Heart right ventricle (tissue), 16 donors: ENCODE measurements at regions of chr9 and their contacts with region 1.

Region 1: DNA sequence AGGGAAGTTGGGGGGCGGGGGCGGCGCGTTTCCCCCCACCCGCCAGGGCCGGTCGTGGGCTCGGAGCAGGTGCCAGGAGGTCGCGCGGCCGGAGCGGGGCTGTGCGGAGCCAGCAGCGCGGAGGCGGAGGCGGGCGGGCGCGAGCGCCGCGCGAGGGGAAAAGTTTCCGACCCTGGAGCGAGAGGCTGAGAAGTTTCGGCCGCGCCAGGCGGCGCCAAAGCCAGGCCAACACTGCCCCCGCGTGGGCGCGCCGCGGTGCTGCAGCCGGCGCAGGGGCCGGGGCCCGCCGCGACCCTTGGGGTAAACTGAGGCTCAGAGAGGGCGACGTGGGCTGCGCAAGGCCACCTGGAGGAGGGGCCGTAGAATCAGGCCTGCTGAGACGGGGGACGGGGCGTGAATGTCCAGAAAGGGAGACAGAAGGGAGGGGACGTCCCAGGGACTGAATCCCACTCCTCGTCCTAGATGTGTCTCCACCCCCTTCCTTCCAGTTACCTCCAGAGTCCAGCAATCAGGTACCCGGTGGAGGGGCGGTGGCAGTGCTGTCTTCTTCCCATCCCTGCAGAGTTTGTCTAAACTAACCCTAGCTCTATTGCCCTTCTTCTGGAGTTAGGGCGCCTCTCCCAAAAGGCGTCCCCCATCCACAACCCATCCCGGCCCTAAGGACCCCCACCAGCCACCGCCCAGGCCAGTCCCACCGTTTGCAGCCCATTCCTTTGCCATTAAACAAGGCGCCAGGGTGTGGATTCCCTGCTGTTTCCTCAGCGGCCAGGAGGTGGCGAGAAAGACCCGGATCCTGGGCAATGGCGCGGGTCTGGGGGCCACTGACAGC is 10.2 kb downstream of the C9orf50 start:
- DNase-seq: peak; percentile 79 to 87
- ATAC-seq: peak; percentile 28 to 75 (median 48)
- H3K4me3 ChIP-seq: peak overlapping the region; percentile 32 to 77 (median 64)
- H3K27ac ChIP-seq: peak overlapping the region; percentile 81 to 98 (median 94)
- H3K4me1 ChIP-seq: peaks cover 32 to 51% (median 43%) of the 10 kb centered on the region in 9 donors
- H3K27me3 ChIP-seq: no peaks in the 10 kb centered on the region
- CTCF ChIP-seq: peak; percentile 74 to 99 (median 87)

Region 2: GRCh38 chr9:129131300-129132145 is 479.2 kb before region 1 on chr9:
- intact Hi-C with region 1: loop called in 4 of 10 experiments (anchors 2 to 5 kb)
- DNase-seq: peak; percentile 81 to 82
- ATAC-seq: peak; percentile 80 to 90 (median 86)
- H3K4me3 ChIP-seq: no peak overlapping the region
- H3K27ac ChIP-seq: peak overlapping the region in 2 of 10 donors; percentile 2 to 28
- H3K4me1 ChIP-seq: peaks cover 0 to 20% (median 6%) of the 10 kb centered on the region in 9 donors
- H3K27me3 ChIP-seq: no peaks in the 10 kb centered on the region
- CTCF ChIP-seq: peak; percentile 95 to 99 (median 98)

Region 3: DNA sequence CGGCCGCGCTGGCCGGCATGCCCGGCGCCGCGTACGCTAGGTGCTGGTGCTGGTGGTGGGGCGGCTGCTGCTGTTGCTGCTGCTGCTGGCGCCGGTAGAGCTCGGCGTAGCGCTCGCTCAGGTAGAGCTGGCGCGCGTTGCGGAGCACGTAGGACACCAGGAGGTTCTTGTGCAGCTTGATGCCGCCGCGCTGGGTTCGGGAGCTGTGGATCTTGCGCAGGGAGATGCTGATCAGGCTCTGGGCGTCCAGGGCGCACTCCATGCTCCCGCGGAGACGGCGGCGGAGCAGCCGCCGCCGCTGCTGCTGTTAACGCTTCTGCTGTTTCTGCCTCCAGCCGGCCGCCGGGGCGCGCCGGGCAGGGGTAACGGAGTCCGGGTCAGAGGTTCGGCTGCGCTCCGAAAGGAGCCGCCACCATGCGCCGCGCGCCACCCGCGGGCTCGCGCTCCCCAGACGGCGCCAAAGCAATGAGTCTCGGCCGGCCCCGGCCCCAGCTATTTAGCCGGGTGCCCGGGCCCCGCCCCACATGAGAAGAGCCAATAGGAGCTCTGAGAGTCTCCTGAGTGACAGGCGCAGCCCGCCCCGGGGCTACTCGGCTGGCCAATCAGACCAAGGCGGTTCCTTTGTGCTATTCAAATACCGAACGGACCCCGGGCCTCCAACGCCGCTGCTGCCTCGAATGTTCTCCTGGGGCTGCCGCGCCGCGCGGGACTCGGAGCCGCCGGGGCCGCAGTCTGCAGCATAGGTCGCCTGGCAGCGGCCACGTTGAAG is 432.7 kb before region 1 on chr9 and contains the start of gene IER5L:
- intact Hi-C with region 1: loop called in 8 of 10 experiments (anchors 1 to 10 kb)
- DNase-seq: peak; percentile 94
- ATAC-seq: peak; percentile 80 to 91 (median 84)
- H3K4me3 ChIP-seq: peak within 1 kb of the TSS; percentile 72 to 100 (median 96)
- H3K27ac ChIP-seq: peak within 1 kb of the TSS; percentile 96 to 100 (median 98)
- H3K4me1 ChIP-seq: peaks cover 11 to 40% (median 29%) of the 10 kb centered on the region in 9 donors
- H3K27me3 ChIP-seq: peaks cover 0 to 6% (median 0%) of the 10 kb centered on the region in 7 donors
- CTCF ChIP-seq: peak in 3 of 9 donors; percentile 7 to 11 (median 10)
- total RNA-seq, gene IER5L: 1.2 to 13.7 (median 5.6) TPM

Region 4: GRCh38 chr9:129320575-129321263 is 290.0 kb before region 1 on chr9:
- intact Hi-C with region 1: loop called in 5 of 10 experiments (anchors 2 to 10 kb)
- DNase-seq: peak; percentile 68 to 74
- ATAC-seq: peak; percentile 76 to 85 (median 83)
- H3K4me3 ChIP-seq: peak overlapping the region; percentile 3 to 63 (median 51)
- H3K27ac ChIP-seq: peak overlapping the region; percentile 85 to 95 (median 90)
- H3K4me1 ChIP-seq: peaks cover 29 to 85% (median 61%) of the 10 kb centered on the region in 9 donors
- H3K27me3 ChIP-seq: no peaks in the 10 kb centered on the region
- CTCF ChIP-seq: peak in 8 of 9 donors; percentile 6 to 47 (median 38)

Region 5: GRCh38 chr9:129343424-129344375 is 267.0 kb before region 1 on chr9:
- intact Hi-C with region 1: loop called in 2 of 10 experiments (anchors 10 kb)
- DNase-seq: peak in 1 of 2 donors; percentile 60
- ATAC-seq: peak; percentile 52 to 80 (median 71)
- H3K4me3 ChIP-seq: no peak overlapping the region
- H3K27ac ChIP-seq: peak overlapping the region in 8 of 10 donors; percentile 25 to 89 (median 54)
- H3K4me1 ChIP-seq: peaks cover 0 to 80% (median 9%) of the 10 kb centered on the region in 9 donors
- H3K27me3 ChIP-seq: no peaks in the 10 kb centered on the region
- CTCF ChIP-seq: peak in 1 of 9 donors; percentile 17

Region 6: GRCh38 chr9:129487642-129488409 is 122.9 kb before region 1 on chr9:
- intact Hi-C with region 1: loop called in 5 of 10 experiments (anchors 2 to 10 kb)
- DNase-seq: peak; percentile 53 to 65
- ATAC-seq: peak in 5 of 8 donors; percentile 0 to 12 (median 5)
- H3K4me3 ChIP-seq: peak overlapping the region; percentile 44 to 61 (median 56)
- H3K27ac ChIP-seq: peak overlapping the region; percentile 96 to 100 (median 99)
- H3K4me1 ChIP-seq: peaks cover 33 to 94% (median 70%) of the 10 kb centered on the region in 9 donors
- H3K27me3 ChIP-seq: no peaks in the 10 kb centered on the region
- CTCF ChIP-seq: no peak